CD4-positive, alpha-beta T cell (primary cell): ENCODE measurements at regions of chr5 and their contacts with region 1.

Region 1: GRCh38 chr5:172006321-172007174 is at the start of gene FBXW11:
- DNase-seq: peak; percentile 85 to 98 (median 92)
- ATAC-seq: peak; percentile 86
- H3K4me3 ChIP-seq: peak within 1 kb of the TSS; percentile 92
- H3K4me3 Mint-ChIP-seq: peak within 1 kb of the TSS; percentile 97
- H3K27ac ChIP-seq: peak within 1 kb of the TSS; percentile 96 to 98
- H3K27ac Mint-ChIP-seq: peak within 1 kb of the TSS; percentile 99
- H3K4me1 ChIP-seq: peaks cover 30% of the 10 kb centered on the region
- H3K4me1 Mint-ChIP-seq: peaks cover 57% of the 10 kb centered on the region
- H3K27me3 ChIP-seq: no peaks in the 10 kb centered on the region
- H3K27me3 Mint-ChIP-seq: no peaks in the 10 kb centered on the region
- CTCF ChIP-seq: no peak
- total RNA-seq, gene FBXW11: 20.9 to 24.0 TPM

Region 2: DNA sequence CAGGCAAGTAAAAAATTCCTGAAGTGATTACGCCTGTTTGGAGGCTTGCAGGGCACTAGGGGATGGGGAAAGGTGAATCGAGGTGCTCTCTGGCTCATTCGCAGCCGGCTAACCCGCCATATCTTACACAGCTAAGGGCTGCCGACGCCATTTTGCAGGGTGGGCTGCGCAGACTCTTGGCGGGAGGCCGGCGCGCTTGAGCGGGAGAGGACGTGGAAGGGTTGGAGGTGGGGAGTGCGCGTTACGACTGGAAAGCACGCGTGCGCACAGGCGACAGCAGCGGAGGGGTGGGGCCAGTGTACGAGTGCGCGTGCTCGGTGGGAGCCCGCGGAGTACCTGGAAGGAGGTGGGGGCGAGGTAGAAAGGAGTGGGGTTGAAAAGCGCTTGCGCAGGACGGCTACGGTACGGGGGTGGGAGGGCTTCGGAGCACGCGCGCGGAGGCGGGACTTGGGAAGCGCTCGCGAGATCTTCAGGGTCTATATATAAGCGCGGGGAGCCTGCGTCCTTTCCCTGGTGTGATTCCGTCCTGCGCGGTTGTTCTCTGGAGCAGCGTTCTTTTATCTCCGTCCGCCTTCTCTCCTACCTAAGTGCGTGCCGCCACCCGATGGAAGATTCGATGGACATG is 619.1 kb before region 1 on chr5 and contains the start of gene NPM1:
- CTCF ChIA-PET with region 1: no interaction called
- POLR2A ChIA-PET with region 1: interaction called, 17 read pairs
- intact Hi-C with region 1: loop called in 1 of 2 experiments (anchors 5 kb)
- DNase-seq: peak; percentile 93 to 100 (median 98)
- ATAC-seq: peak; percentile 85
- H3K4me3 ChIP-seq: peak within 1 kb of the TSS; percentile 79
- H3K4me3 Mint-ChIP-seq: peak within 1 kb of the TSS; percentile 97
- H3K27ac ChIP-seq: peak within 1 kb of the TSS; percentile 75 to 83
- H3K27ac Mint-ChIP-seq: peak within 1 kb of the TSS; percentile 96
- H3K4me1 ChIP-seq: peaks cover 40% of the 10 kb centered on the region
- H3K4me1 Mint-ChIP-seq: peaks cover 58% of the 10 kb centered on the region
- H3K27me3 ChIP-seq: no peaks in the 10 kb centered on the region
- H3K27me3 Mint-ChIP-seq: no peaks in the 10 kb centered on the region
- CTCF ChIP-seq: no peak
- total RNA-seq, gene NPM1: 1,243 to 1,379 TPM

Region 3: DNA sequence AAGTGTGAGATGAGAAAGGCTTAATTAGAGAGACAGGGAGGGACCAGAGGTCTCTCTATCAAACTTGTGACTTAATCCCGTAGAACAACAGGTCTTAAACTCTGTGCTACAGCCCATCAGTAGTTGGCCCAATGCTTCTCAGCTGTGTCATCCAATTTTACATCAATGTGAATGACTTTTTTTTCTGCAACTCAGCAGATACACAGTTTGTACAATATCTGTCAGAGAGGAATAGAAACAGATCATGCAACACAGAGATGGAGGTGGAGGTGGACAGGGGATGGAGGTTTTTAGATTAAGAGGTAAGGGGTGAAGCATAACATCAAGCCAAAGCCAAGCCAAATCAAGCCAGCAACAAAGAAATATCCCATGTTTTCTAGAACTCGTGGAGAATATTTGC is 43.1 kb before region 1 on chr5:
- CTCF ChIA-PET with region 1: no interaction called
- POLR2A ChIA-PET with region 1: interaction called, 10 read pairs
- intact Hi-C with region 1: loop called in 1 of 2 experiments (anchors 5 kb)
- DNase-seq: no peak
- ATAC-seq: no peak
- H3K4me3 ChIP-seq: no peak overlapping the region
- H3K4me3 Mint-ChIP-seq: no peak overlapping the region
- H3K27ac ChIP-seq: no peak overlapping the region
- H3K27ac Mint-ChIP-seq: no peak overlapping the region
- H3K4me1 ChIP-seq: peaks cover 15% of the 10 kb centered on the region
- H3K4me1 Mint-ChIP-seq: peaks cover 88% of the 10 kb centered on the region
- H3K27me3 ChIP-seq: no peaks in the 10 kb centered on the region
- H3K27me3 Mint-ChIP-seq: no peaks in the 10 kb centered on the region
- CTCF ChIP-seq: no peak

Region 4: DNA sequence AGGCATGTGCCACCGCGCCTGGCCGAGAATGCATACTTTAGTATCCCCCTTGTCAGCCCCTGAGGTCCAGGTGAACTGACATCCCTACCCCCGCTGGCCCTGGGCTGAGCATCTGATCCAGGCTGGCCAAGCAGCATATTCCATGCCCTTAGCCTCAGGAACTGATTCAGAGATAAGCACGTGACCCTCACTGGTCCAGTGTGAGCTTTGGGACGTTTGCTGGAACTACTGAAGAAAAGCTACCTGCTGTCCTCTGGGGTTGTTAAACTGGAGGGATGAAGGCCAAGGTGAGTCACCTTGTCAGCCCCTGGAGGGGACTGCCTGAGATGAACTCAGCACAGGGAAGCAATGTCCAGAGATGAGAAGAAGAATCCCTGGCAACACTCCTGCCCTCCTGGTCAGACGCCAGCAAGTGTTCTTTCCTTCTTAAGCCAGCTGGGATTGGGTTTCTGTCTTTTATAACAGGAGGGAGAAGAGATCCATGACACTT is 59.0 kb after region 1 on chr5:
- CTCF ChIA-PET with region 1: no interaction called
- POLR2A ChIA-PET with region 1: interaction called, 53 read pairs
- intact Hi-C with region 1: no loop called
- DNase-seq: peak in 1 of 14 experiments; percentile 34
- ATAC-seq: no peak
- H3K4me3 ChIP-seq: no peak overlapping the region
- H3K4me3 Mint-ChIP-seq: no peak overlapping the region
- H3K27ac ChIP-seq: peak overlapping the region; percentile 69 to 84
- H3K27ac Mint-ChIP-seq: peak overlapping the region; percentile 89
- H3K4me1 ChIP-seq: peaks cover 44% of the 10 kb centered on the region
- H3K4me1 Mint-ChIP-seq: peaks cover 76% of the 10 kb centered on the region
- H3K27me3 ChIP-seq: no peaks in the 10 kb centered on the region
- H3K27me3 Mint-ChIP-seq: no peaks in the 10 kb centered on the region
- CTCF ChIP-seq: no peak

Region 5: DNA sequence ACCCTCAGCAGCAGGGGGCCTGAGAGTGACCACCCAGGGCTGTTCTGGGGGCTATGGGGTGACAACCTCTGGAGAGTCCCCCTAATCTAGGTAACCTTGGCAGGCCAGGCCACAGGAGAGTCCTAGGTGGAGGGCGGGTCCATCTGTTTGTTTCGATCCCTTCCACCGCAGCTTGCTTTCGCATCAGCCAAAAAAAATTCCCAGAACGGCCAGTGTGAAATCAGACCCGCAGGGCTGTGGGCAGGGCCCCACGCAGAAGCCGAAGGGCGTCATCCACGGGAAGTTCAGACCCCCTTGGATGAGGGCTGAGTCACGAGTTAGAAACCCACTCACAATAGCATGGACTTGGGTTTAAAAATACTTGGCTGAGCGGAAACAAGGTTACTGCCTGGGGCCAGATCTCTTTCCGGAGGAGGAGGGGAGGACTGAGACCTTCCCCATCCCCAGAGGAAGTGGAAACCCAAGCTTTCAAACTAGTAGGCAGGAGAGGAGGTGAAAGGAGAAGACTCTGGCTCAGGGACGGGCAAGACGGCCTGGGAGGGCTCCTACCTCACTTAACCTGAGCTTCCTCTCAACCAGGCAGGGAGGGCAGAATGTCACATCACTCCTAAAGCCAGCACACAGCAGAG is 172.9 kb after region 1 on chr5:
- CTCF ChIA-PET with region 1: interaction called, 5 read pairs
- POLR2A ChIA-PET with region 1: interaction called, 57 read pairs
- intact Hi-C with region 1: no loop called
- DNase-seq: peak in 9 of 14 experiments; percentile 23 to 83 (median 41)
- ATAC-seq: peak; percentile 1
- H3K4me3 ChIP-seq: peak overlapping the region; percentile 57
- H3K4me3 Mint-ChIP-seq: peak overlapping the region; percentile 91
- H3K27ac ChIP-seq: peak overlapping the region; percentile 97 to 98
- H3K27ac Mint-ChIP-seq: peak overlapping the region; percentile 98
- H3K4me1 ChIP-seq: peaks cover 99% of the 10 kb centered on the region
- H3K4me1 Mint-ChIP-seq: peaks cover 93% of the 10 kb centered on the region
- H3K27me3 ChIP-seq: no peaks in the 10 kb centered on the region
- H3K27me3 Mint-ChIP-seq: no peaks in the 10 kb centered on the region
- CTCF ChIP-seq: no peak

Region 6: DNA sequence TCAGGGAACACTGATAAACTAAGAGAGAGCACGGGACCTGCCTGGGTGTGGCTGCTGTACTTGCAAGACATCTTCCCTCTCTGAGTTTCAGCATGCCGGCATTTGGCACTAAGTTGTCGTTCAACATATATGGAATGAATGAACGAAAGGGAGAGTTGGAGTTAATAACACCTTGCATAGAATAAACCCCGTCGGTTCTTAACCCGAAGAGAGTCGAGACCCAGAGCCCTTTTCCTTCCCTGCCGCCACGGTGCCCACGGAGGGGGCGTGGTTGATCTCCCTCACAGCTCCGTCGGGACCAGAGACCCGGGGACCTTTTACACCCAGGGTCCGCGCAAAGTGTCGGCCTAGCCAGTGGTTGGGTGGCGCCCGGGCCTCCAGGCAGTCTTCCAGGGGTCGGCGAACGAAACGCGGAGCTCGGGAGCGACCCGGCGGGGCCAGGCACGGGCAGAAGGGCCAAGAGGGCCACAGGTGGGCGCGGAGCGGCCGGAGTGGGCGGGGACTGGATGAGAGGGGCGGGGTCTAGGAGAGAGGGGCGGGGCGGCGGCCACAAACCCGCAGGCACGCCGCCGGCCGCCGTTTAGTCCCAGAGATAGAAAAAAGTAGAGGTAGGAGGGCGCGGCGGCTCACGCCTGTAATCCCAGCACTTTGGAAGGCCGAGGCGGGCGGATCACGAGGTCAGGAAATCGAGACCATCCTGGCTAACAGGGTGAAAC is 951.9 kb after region 1 on chr5:
- CTCF ChIA-PET with region 1: no interaction called
- POLR2A ChIA-PET with region 1: no interaction called
- intact Hi-C with region 1: loop called in 1 of 2 experiments (anchors 5 kb)
- DNase-seq: peak; percentile 35 to 83 (median 56)
- ATAC-seq: peak; percentile 49
- H3K4me3 ChIP-seq: peak overlapping the region; percentile 93
- H3K4me3 Mint-ChIP-seq: peak overlapping the region; percentile 97
- H3K27ac ChIP-seq: peak overlapping the region; percentile 59 to 76
- H3K27ac Mint-ChIP-seq: peak overlapping the region; percentile 96
- H3K4me1 ChIP-seq: peaks cover 21% of the 10 kb centered on the region
- H3K4me1 Mint-ChIP-seq: peaks cover 44% of the 10 kb centered on the region
- H3K27me3 ChIP-seq: no peaks in the 10 kb centered on the region
- H3K27me3 Mint-ChIP-seq: no peaks in the 10 kb centered on the region
- CTCF ChIP-seq: no peak